Activated CD4-positive, alpha-beta memory T cell treated with anti-CD3 and anti-CD28 coated beads, Interleukin-2, amount 10 ng/mL, durations not matched to agents 7 days and 5 days (primary cell): ENCODE measurements at regions of chr16 and their contacts with region 1.

Region 1: GRCh38 chr16:71883849-71884638 is at the start of gene ZNF821:
- DNase-seq: peak; percentile 79
- H3K4me3 Mint-ChIP-seq: peak within 1 kb of the TSS; percentile 95
- H3K27ac Mint-ChIP-seq: peak within 1 kb of the TSS; percentile 86
- H3K4me1 Mint-ChIP-seq: peaks cover 45% of the 10 kb centered on the region
- H3K27me3 Mint-ChIP-seq: peaks cover 5% of the 10 kb centered on the region
- total RNA-seq, gene ZNF821: 11.4 to 11.9 TPM

Region 2: GRCh38 chr16:71726476-71727315 is 157.3 kb before region 1 on chr16:
- CTCF ChIA-PET with region 1: interaction called, 10 read pairs
- POLR2A ChIA-PET with region 1: no interaction called
- DNase-seq: no peak
- H3K4me3 Mint-ChIP-seq: no peak overlapping the region
- H3K27ac Mint-ChIP-seq: no peak overlapping the region
- H3K4me1 Mint-ChIP-seq: peaks cover 17% of the 10 kb centered on the region
- H3K27me3 Mint-ChIP-seq: peaks cover 10% of the 10 kb centered on the region

Region 3: GRCh38 chr16:71808593-71809459 is 75.2 kb before region 1 on chr16 and contains the start of gene AP1G1:
- CTCF ChIA-PET with region 1: interaction called, 22 read pairs
- POLR2A ChIA-PET with region 1: interaction called, 89 read pairs
- DNase-seq: peak; percentile 94
- H3K4me3 Mint-ChIP-seq: peak within 1 kb of the TSS; percentile 94
- H3K27ac Mint-ChIP-seq: peak within 1 kb of the TSS; percentile 93
- H3K4me1 Mint-ChIP-seq: peaks cover 30% of the 10 kb centered on the region
- H3K27me3 Mint-ChIP-seq: no peaks in the 10 kb centered on the region
- total RNA-seq, gene AP1G1: 78.7 to 82.6 TPM

Region 4: DNA sequence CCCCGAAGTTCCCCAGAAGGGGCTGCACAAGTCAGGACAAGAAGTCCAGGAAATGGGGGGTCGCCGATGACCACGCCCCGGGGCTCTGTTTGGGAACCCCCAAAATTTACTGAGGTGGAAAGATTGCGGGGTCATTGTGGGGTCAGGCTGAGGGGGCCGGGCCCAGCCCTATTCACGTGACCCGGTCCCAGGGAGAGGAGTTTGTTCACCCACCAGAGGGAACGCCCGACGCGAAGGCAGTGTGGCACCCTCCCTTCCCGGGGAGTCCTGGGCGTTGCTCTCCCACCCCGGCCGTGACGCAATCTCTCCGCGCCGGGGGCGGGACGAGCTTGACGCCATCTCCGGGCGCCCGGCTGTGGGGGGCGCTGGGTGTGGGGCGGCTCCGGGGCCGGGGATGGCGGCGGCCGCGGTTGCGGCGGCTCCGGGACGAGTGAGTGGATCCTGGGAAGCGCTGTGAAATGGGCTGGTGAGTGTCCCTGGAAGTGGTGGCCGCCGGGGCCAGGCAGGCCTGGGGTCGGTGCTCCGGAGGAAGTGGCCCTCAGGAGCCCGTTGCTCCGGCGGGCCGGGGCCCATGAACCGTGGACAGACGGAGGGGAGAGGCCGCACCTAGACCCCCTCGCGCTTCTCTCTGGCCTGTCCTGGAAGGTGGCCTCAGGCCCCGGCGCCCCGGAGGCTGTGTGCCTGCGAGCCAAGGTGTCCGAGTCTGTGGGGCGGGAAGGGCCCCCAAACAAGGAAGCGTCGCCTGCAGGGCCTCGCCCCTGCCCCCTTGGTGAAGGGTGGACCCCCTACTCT is 38.2 kb before region 1 on chr16 and contains the start of gene ATXN1L:
- CTCF ChIA-PET with region 1: interaction called, 12 read pairs
- POLR2A ChIA-PET with region 1: interaction called, 15 read pairs
- DNase-seq: peak; percentile 94
- H3K4me3 Mint-ChIP-seq: peak within 1 kb of the TSS; percentile 91
- H3K27ac Mint-ChIP-seq: peak within 1 kb of the TSS; percentile 93
- H3K4me1 Mint-ChIP-seq: peaks cover 53% of the 10 kb centered on the region
- H3K27me3 Mint-ChIP-seq: no peaks in the 10 kb centered on the region
- total RNA-seq, gene ATXN1L: 23.6 to 24.8 TPM

Region 5: GRCh38 chr16:71870818-71871217 is 13.2 kb before region 1 on chr16:
- CTCF ChIA-PET with region 1: interaction called, 43 read pairs
- POLR2A ChIA-PET with region 1: interaction called, 14 read pairs
- DNase-seq: no peak
- H3K4me3 Mint-ChIP-seq: no peak overlapping the region
- H3K27ac Mint-ChIP-seq: no peak overlapping the region
- H3K4me1 Mint-ChIP-seq: peaks cover 16% of the 10 kb centered on the region
- H3K27me3 Mint-ChIP-seq: no peaks in the 10 kb centered on the region

Region 6: DNA sequence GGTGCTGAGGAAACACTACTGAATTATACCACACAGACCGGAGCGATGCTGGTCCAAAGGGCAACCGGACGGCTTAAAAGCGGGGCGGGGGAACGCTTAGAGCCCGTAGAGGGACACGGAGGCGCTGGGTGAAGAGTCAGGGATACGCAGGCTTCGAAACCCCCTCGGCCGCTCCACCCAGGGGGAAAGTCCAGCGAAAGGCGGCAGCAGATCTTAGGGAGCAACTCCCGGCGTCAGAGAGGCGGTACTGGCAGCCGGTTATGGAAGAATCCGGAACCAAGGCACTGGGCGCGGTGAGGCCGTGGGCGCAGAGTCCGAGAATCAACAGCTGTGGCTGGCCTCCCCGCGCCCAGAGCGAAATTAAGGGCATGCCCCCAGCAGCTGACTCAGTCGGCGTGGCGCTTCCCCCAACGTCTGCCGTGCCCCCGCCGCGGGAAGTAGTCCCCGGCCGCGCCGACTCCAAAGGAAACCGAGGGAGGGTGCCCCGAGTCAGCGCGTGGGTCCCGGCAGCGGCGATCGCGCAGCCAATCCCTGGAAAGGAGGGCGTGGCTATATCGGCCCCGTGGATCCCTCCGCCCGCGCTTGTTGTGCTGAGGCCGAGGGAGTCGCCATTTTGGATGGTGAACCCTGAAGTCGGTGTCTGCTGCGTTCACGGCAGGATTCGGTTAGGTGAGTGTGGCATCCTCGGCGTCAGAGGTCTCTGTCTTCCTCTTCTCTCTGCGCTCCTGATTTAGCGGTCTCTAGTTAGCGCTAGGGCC is 11.1 kb after region 1 on chr16 and contains the start of gene IST1:
- CTCF ChIA-PET with region 1: interaction called, 97 read pairs
- POLR2A ChIA-PET with region 1: interaction called, 111 read pairs
- DNase-seq: peak; percentile 98
- H3K4me3 Mint-ChIP-seq: peak within 1 kb of the TSS; percentile 99
- H3K27ac Mint-ChIP-seq: peak within 1 kb of the TSS; percentile 97
- H3K4me1 Mint-ChIP-seq: peaks cover 29% of the 10 kb centered on the region
- H3K27me3 Mint-ChIP-seq: no peaks in the 10 kb centered on the region
- total RNA-seq, gene IST1: 227 to 229 TPM

Region 7: DNA sequence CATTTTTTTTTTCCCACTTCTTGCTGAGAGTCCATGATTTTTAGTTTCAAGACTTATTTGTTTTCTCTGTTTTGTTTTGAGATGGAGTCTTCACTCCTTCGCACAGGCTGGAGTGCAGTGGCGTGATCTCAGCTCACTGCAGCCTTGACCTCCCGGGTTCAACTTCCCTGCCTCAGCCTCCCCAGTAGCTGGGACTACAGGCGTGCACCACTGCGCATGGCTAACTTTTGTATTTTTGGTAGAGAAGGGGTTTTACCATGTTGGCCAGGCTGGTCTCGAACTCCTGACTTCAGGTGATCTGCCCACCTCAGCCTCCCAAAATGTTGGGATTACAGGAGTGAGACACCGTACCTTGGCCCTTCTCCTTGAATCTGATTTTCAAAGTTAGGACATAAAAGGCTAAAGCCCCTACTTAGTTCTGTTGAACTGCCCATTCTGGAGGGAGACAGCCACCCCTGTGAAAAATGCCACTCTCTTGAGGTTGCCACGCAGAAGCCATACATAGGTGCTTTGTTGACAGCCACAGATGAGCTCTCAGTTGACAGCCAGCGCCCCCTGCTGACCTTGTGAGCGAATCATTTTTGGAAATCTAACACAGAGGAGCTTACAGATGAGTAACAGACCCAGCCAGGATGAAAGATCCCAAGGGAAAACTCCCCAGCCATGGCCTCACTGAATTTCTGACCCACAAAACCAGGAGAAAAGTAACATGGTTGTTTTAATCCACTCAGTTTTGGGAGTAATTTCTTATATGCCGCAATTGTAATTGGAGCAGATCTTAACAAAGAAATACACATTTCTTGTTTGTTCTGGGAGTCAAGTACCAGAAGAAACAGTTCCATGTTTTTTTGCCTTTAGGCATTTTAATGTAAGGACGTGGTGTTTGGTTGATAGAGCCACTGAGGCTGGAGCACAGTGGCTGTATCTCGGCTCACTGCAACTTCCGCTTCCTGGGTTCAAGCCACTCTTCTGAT is 77.3 kb after region 1 on chr16:
- CTCF ChIA-PET with region 1: interaction called, 19 read pairs
- POLR2A ChIA-PET with region 1: no interaction called
- DNase-seq: peak; percentile 85
- H3K4me3 Mint-ChIP-seq: no peak overlapping the region
- H3K27ac Mint-ChIP-seq: no peak overlapping the region
- H3K4me1 Mint-ChIP-seq: peaks cover 15% of the 10 kb centered on the region
- H3K27me3 Mint-ChIP-seq: peaks cover 7% of the 10 kb centered on the region